ENCODE measurements at regions of chr6 and their contacts with region 1.

Region 1: DNA sequence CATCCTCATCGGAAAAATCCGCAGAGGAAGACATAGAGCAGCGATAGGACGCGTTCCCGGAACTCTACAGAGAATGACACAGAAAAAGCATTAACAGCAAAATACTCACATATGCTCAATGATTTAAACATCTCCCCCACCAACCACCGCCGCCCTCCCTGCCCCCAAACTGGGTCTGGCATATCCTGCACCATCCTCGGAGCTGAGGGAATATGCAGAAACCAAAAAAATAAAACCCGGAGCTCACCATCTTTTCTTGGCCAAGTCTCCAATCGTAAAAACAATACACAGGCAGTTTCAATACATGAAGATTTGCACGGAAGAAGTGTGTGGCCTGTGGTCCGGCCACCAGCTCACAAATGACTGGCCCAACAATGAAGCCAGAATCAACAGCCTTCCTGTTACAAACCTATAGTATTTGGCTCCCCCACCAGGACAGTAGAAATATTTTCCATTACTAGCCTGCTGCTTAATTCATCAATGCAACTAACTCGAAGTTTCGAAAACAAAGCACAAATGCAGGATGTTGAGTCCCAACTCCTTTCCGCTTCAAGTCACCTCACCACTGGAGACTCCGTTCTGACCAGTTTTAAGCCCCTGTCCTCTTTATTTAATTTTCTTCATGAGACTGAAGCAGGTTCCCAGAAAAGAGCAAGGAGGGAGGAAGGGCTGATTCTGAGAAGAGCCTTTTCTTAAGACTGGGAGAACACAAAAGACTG is 103.2 kb upstream of the BEND6 start:
- DNase-seq: peak; percentile 55 to 78 (median 66)
- H3K4me3 ChIP-seq: peak overlapping the region in 2 of 4 donors; percentile 54 to 67
- H3K27ac ChIP-seq: peak overlapping the region in 3 of 5 donors; percentile 50 to 64 (median 50)
- H3K4me1 ChIP-seq: peaks cover 8 to 18% of the 10 kb centered on the region in 2 donors
- H3K27me3 ChIP-seq: no peaks in the 10 kb centered on the region
- CTCF ChIP-seq: peak; percentile 35 to 77 (median 72)
- POLR2A ChIP-seq: peak in 1 of 2 donors; percentile 69

Region 2: DNA sequence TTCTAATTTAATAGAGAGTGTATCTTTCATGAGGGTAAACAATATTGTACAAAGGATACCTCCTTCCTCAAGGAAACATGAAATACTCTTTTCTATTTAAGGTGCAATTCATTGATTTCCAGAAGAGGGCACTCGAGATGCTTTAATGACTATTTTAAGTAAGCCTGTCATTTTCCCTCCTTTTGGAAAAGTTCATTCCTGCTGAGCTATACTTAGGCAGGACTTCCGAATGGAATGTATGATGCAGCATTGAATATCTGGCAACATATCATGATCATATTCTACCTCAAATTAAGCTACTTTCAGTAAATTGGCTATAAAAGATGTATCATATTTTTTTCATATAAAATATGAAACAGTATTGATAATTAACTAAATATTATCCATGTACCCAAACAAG is 214.1 kb before region 1 on chr6:
- intact Hi-C with region 1: loop called in 1 of 2 experiments (anchors 10 kb)
- DNase-seq: no peak
- H3K4me3 ChIP-seq: no peak overlapping the region
- H3K27ac ChIP-seq: no peak overlapping the region
- H3K4me1 ChIP-seq: no peaks in the 10 kb centered on the region
- H3K27me3 ChIP-seq: no peaks in the 10 kb centered on the region
- CTCF ChIP-seq: peak; percentile 51 to 83 (median 71)
- POLR2A ChIP-seq: no peak

Region 3: GRCh38 chr6:56708810-56709597 is 142.7 kb before region 1 on chr6:
- intact Hi-C with region 1: loop called (anchors 5 to 10 kb)
- DNase-seq: no peak
- H3K4me3 ChIP-seq: no peak overlapping the region
- H3K27ac ChIP-seq: peak overlapping the region in 4 of 5 donors; percentile 34 to 66 (median 60)
- H3K4me1 ChIP-seq: peaks cover 13 to 30% of the 10 kb centered on the region in 2 donors
- H3K27me3 ChIP-seq: no peaks in the 10 kb centered on the region
- CTCF ChIP-seq: peak; percentile 40 to 68 (median 59)
- POLR2A ChIP-seq: no peak

Region 4: DNA sequence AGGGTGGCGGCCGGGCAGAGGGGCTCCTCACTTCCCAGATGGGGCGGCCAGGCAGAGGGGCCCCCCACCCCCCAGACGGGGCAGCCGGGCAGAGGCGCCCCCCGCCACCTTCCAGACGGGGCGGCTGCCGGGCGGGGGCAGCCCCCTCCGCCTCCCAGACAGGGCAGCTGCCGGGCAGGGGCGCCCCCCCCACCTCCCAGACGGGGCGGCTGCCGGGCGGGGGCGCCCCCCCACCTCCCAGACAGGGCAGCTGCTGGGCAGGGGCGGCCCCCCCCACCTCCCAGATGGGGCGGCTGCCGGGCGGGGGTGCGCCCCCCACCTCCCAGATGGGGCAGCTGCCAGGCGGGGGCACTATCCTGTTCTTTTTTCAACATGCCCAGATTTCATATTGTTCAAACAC is 130.8 kb before region 1 on chr6:
- intact Hi-C with region 1: no loop called
- DNase-seq: no peak
- H3K4me3 ChIP-seq: no peak overlapping the region
- H3K27ac ChIP-seq: no peak overlapping the region
- H3K4me1 ChIP-seq: peaks cover 0 to 7% of the 10 kb centered on the region in 2 donors
- H3K27me3 ChIP-seq: no peaks in the 10 kb centered on the region
- CTCF ChIP-seq: no peak
- POLR2A ChIP-seq: no peak

Measured in adrenal gland (tissue), 19 donors.